ENCODE measurements at regions of chr9 and their contacts with region 1.

Region 1: DNA sequence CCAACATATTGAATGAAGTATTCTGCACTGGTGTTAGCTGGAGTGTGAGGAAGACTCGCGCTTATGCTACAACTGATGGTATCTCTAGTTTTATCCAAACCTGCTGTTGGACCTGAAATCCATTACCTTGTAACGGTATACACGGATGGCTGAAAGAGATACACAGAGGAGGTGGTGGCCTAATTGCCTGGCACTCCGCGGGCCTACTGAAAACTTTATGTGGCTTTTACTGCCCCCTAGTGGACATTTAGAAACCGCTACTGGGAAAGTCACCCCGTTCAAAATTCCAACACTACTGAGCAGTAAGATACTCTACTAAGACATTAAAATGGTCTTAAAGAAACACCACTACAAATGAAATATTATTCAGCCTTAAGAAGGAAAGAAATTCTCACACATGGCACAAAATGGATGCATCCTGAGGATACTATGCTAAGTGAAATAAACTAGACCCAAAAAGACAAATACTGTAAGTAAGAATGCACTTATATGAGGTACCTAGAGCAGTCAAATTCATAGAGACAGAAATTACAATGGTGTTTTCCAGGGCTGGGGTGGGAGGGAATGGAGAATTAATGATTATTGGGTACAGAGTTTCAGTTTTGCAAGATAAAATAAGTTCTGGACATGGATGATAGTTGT is 100.4 kb downstream of the TTLL11 start:
- DNase-seq: peak; percentile 49 to 68 (median 59)
- ATAC-seq: peak; percentile 89 to 96 (median 94)
- H3K4me3 ChIP-seq: no peak overlapping the region
- H3K27ac ChIP-seq: no peak overlapping the region
- H3K4me1 ChIP-seq: peaks cover 0 to 8% (median 1%) of the 10 kb centered on the region in 4 donors
- H3K27me3 ChIP-seq: no peaks in the 10 kb centered on the region
- CTCF ChIP-seq: peak; percentile 84 to 93 (median 86)
- POLR2A ChIP-seq: no peak

Region 2: GRCh38 chr9:121692606-121693387 is 299.9 kb before region 1 on chr9:
- intact Hi-C with region 1: loop called in 1 of 2 experiments (anchors 5 kb)
- DNase-seq: no peak
- ATAC-seq: peak in 2 of 4 donors; percentile 31 to 45
- H3K4me3 ChIP-seq: no peak overlapping the region
- H3K27ac ChIP-seq: no peak overlapping the region
- H3K4me1 ChIP-seq: no peaks in the 10 kb centered on the region
- H3K27me3 ChIP-seq: no peaks in the 10 kb centered on the region
- CTCF ChIP-seq: no peak
- POLR2A ChIP-seq: no peak

Region 3: GRCh38 chr9:121744002-121744686 is 248.5 kb before region 1 on chr9:
- intact Hi-C with region 1: loop called in 1 of 2 experiments (anchors 10 kb)
- DNase-seq: peak; percentile 66 to 80 (median 75)
- ATAC-seq: peak; percentile 75 to 81 (median 78)
- H3K4me3 ChIP-seq: peak overlapping the region; percentile 45 to 72 (median 69)
- H3K27ac ChIP-seq: peak overlapping the region; percentile 74 to 83 (median 80)
- H3K4me1 ChIP-seq: peaks cover 0 to 17% (median 4%) of the 10 kb centered on the region in 4 donors
- H3K27me3 ChIP-seq: no peaks in the 10 kb centered on the region
- CTCF ChIP-seq: peak; percentile 57 to 74 (median 68)
- POLR2A ChIP-seq: no peak

Region 4: DNA sequence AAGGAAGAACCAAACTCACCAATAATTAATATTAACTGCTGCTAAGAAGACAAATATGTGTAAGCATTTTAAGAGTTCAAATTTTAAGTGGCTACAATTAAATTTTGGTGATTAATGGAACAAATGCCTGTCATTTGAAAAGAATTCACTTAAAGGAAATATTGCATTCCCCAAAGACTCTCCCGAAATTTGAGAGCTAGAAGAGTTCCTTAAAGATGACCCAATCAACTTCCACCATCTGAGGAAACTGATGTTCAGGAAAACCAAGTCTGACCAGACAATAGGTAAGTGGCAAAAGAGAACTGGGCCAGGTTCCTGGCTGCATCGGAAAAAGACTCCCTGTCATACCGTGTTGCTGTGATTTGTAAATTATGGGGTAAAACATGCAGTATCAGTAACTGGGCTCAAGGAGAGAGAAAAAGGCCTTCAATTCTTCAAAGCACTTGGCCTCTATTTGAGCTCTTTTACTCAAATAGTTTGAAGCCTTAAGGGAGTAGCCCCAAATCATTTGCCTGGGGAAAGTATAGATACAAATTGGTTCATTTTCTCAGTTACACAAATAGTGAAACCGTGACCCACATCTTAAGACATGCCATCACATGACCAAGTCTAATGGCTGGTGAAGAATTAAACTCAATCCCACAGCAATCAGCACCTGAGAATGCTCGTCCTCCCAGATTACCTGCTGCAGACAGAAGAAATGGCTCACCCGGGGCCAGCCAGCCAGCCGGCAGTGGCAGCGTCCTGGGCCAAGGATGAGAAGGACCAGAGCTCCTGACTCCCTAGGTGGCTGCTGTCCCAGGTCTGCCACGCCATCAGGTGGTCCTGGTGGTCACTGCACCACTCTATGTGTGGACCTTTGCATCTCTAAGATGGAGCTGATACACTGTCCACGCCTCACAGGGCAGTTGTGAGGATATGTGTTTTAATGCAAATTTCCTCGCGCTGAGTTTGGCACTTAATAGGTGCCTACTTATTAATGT is 62.5 kb before region 1 on chr9:
- intact Hi-C with region 1: no loop called
- DNase-seq: no peak
- ATAC-seq: no peak
- H3K4me3 ChIP-seq: no peak overlapping the region
- H3K27ac ChIP-seq: no peak overlapping the region
- H3K4me1 ChIP-seq: peaks cover 0 to 1% (median under 1%) of the 10 kb centered on the region in 4 donors
- H3K27me3 ChIP-seq: no peaks in the 10 kb centered on the region
- CTCF ChIP-seq: no peak
- POLR2A ChIP-seq: no peak

Measured in right lobe of liver (tissue), 6 donors.